Activated CD8-positive, alpha-beta T cell treated with anti-CD3 and anti-CD28 coated beads for 36 hours (primary cell): ENCODE measurements at regions of chr1 and their contacts with region 1.

Region 1: GRCh38 chr1:110879758-110880606 is 7.0 kb downstream of the CD53 start:
- DNase-seq: peak; percentile 86
- ATAC-seq: peak; percentile 65
- H3K4me3 Mint-ChIP-seq: peak overlapping the region; percentile 91
- H3K27ac Mint-ChIP-seq: peak overlapping the region; percentile 99
- H3K4me1 Mint-ChIP-seq: peaks cover 50% of the 10 kb centered on the region
- H3K27me3 Mint-ChIP-seq: no peaks in the 10 kb centered on the region
- CTCF ChIP-seq: no peak

Region 2: DNA sequence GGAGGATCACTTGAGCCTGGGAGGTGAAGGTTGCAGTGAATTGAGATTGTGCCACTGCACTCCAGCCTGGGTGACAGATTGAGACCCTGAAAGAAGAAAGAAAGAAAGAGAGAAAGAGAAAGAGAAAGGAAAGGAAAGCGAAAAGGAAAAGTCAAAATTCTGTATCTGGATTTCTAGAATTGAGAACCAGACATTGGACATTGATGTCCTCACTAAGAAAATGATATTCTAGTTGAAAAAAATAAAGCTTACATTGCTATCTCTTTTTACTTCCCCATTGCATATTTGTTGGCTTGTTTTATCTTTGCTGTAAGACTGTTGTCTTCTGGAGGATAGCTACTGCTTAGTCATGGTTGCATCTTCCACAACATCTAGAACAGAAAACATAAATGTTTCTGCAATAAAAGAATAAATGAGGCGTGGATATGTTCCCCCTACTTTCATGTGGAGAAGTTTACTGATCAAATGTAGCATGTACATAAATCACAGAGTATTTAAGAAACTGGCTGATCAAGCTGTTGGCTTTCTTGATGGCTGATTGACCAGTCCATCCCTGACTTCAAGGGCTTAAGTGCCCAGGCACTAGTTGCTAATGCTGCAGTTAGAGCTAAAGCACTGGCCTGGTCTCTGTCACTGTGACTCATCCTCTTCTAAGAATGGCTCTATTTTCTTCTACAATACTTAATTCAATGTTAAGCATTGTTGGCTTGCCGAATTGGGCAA is 10.7 kb after region 1 on chr1:
- CTCF ChIA-PET with region 1: interaction called, 3 read pairs
- POLR2A ChIA-PET with region 1: interaction called, 65 read pairs
- intact Hi-C with region 1: no loop called
- DNase-seq: no peak
- ATAC-seq: peak; percentile 50
- H3K4me3 Mint-ChIP-seq: peak overlapping the region; percentile 41
- H3K27ac Mint-ChIP-seq: peak overlapping the region; percentile 81
- H3K4me1 Mint-ChIP-seq: peaks cover 91% of the 10 kb centered on the region
- H3K27me3 Mint-ChIP-seq: no peaks in the 10 kb centered on the region
- CTCF ChIP-seq: no peak

Region 3: DNA sequence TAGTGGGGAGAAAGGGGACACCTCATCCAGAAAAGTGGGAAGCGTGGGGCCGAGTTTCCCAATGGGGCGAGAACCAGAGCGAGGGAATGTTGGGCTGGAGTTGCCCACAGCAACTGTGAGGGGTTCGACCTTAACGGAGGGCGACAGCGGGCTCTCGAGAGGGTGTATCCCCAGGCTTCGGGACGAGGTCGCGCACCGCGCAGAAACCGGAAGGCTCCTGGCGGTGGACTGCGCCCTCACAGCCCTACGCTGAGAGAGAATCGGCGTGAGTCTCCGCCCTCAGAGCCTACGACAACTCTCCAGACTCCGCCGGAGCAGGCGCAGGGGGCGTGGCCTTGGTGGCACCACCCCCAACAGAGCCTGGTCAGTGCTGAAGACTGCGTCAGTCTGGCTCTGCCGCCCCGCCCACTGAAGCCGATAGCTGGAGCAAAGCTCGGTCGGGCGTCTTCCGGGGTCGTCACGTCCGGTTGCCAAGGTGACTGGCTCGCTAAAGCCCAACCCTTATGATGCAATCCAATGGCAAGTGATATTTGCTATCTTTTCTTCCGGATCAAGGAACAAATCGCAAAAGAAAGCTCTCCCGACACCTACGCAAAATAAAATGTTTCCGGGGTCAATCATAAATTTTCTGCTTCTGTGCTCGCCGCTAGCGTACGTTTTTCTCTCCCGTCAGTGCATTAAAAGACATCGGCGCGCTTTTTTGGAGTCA is 83.9 kb after region 1 on chr1 and contains the start of gene LRIF1:
- CTCF ChIA-PET with region 1: interaction called, 4 read pairs
- POLR2A ChIA-PET with region 1: interaction called, 9 read pairs
- intact Hi-C with region 1: loop called (anchors 2 kb)
- DNase-seq: peak; percentile 100
- ATAC-seq: peak; percentile 97
- H3K4me3 Mint-ChIP-seq: peak within 1 kb of the TSS; percentile 84
- H3K27ac Mint-ChIP-seq: peak within 1 kb of the TSS; percentile 97
- H3K4me1 Mint-ChIP-seq: peaks cover 37% of the 10 kb centered on the region
- H3K27me3 Mint-ChIP-seq: peaks cover 7% of the 10 kb centered on the region
- CTCF ChIP-seq: peak; percentile 64
- total RNA-seq, gene LRIF1: 16.0 to 16.1 TPM